Aorta (tissue), 5 donors: ENCODE measurements at regions of chr20 and their contacts with region 1.

Region 1: GRCh38 chr20:10219452-10219791 is 792 bp downstream of the SNAP25 start:
- DNase-seq: peak; percentile 85 to 96
- ATAC-seq: peak; percentile 92
- H3K4me3 ChIP-seq: peak overlapping the region; percentile 36 to 62
- H3K27ac ChIP-seq: peak overlapping the region in 1 of 2 donors; percentile 39
- H3K4me1 ChIP-seq: no peaks in the 10 kb centered on the region
- H3K27me3 ChIP-seq: peaks cover 0 to 2% of the 10 kb centered on the region in 2 donors

Region 2: GRCh38 chr20:9989066-9989724 is 230.2 kb before region 1 on chr20:
- intact Hi-C with region 1: loop called in 1 of 2 experiments (anchors 10 kb)
- DNase-seq: no peak
- ATAC-seq: peak; percentile 65
- H3K4me3 ChIP-seq: no peak overlapping the region
- H3K27ac ChIP-seq: no peak overlapping the region
- H3K4me1 ChIP-seq: no peaks in the 10 kb centered on the region
- H3K27me3 ChIP-seq: no peaks in the 10 kb centered on the region

Region 3: GRCh38 chr20:10171864-10172751 is 47.3 kb before region 1 on chr20:
- intact Hi-C with region 1: loop called in 1 of 2 experiments (anchors 2 kb)
- DNase-seq: peak; percentile 70 to 87
- ATAC-seq: peak; percentile 79
- H3K4me3 ChIP-seq: peak overlapping the region; percentile 57 to 87
- H3K27ac ChIP-seq: no peak overlapping the region
- H3K4me1 ChIP-seq: no peaks in the 10 kb centered on the region
- H3K27me3 ChIP-seq: no peaks in the 10 kb centered on the region

Region 4: DNA sequence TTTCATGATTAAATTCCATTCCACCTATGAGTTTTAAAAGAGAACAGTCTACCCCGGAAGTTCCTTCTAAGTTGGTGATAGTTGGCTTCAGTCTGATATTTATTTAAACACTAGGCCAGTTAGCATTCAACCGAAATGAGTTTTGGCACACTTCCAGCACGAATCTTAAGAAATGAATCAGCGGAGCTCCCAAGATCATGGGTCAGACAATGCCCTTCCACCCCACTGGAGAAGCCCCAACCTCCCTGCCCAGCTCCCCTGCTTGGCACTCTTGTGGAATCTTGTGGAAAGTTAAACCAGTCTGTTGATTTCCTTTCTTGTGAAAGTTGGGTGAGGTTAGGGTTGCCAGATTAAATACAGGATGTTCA is 150.3 kb after region 1 on chr20:
- intact Hi-C with region 1: loop called in 1 of 2 experiments (anchors 5 kb)
- DNase-seq: peak in 1 of 2 donors; percentile 66
- ATAC-seq: no peak
- H3K4me3 ChIP-seq: no peak overlapping the region
- H3K27ac ChIP-seq: no peak overlapping the region
- H3K4me1 ChIP-seq: peaks cover 0 to 2% of the 10 kb centered on the region in 2 donors
- H3K27me3 ChIP-seq: no peaks in the 10 kb centered on the region

Region 5: GRCh38 chr20:10434467-10434831 is 215.0 kb after region 1 on chr20:
- intact Hi-C with region 1: loop called (anchors 2 to 10 kb)
- DNase-seq: peak; percentile 91 to 94
- ATAC-seq: peak; percentile 96
- H3K4me3 ChIP-seq: peak overlapping the region; percentile 69 to 92
- H3K27ac ChIP-seq: peak overlapping the region; percentile 55 to 72
- H3K4me1 ChIP-seq: no peaks in the 10 kb centered on the region
- H3K27me3 ChIP-seq: no peaks in the 10 kb centered on the region